ENCODE measurements at regions of chr17 and their contacts with region 1.

Region 1: DNA sequence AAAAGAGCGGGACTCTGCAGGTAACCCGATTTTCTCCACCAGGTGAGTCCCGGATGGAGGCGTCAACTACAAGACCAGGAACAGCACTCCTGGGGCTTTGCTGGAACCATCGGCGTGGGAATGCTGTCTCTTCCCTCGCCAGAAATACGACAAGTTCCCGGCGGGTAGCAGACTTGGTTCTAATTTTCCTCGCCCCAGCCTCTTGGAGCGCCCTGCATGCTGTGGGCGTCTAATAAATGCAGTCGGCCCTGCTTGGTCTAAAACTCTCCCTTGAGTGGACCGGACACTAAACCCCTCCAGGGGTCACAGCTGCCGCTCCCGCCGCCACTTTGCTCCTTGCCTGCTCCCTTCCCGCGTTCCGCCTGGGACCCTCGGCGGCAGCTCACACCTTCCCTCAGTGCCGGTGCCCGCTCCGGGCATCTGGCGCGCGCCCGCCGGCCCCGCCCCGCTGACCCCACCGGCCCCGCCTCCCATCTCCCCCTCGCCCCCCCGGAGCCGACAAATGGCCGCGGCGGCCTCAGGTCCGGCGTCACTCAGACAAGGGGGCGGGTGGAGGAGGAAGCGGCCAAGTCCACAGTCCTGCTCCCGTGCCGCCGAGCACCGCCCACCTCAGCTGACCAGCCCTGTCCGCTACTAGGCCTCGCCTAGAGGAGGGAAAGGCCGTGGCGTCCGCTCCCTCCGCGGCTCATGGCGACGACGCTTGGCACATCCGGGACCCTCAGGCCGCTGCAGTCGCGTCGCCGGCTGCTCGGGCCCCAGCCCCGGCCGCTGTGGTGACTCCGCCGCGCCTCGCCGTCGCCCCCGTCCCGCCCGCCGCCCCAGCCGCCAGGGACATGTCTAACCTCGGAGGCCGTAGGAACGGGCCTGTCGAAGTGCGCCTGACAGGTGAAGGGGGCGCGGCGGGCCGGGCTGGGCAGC is 65.8 kb downstream of the KPNA2 start:
- DNase-seq: peak; percentile 75
- ATAC-seq: peak; percentile 86
- H3K4me3 Mint-ChIP-seq: peak overlapping the region; percentile 93
- H3K27ac Mint-ChIP-seq: peak overlapping the region; percentile 85
- H3K4me1 Mint-ChIP-seq: peaks cover 31% of the 10 kb centered on the region
- H3K27me3 Mint-ChIP-seq: no peaks in the 10 kb centered on the region
- CTCF ChIP-seq: no peak

Region 2: GRCh38 chr17:68019675-68020408 is 81.5 kb before region 1 on chr17:
- CTCF ChIA-PET with region 1: no interaction called
- POLR2A ChIA-PET with region 1: no interaction called
- intact Hi-C with region 1: loop called (anchors 5 kb)
- DNase-seq: peak; percentile 99
- ATAC-seq: peak; percentile 90
- H3K4me3 Mint-ChIP-seq: peak overlapping the region; percentile 90
- H3K27ac Mint-ChIP-seq: peak overlapping the region; percentile 90
- H3K4me1 Mint-ChIP-seq: peaks cover 14% of the 10 kb centered on the region
- H3K27me3 Mint-ChIP-seq: peaks cover 2% of the 10 kb centered on the region
- CTCF ChIP-seq: no peak

Region 3: GRCh38 chr17:68089887-68090286 is 11.4 kb before region 1 on chr17:
- CTCF ChIA-PET with region 1: no interaction called
- POLR2A ChIA-PET with region 1: interaction called, 5 read pairs
- intact Hi-C with region 1: loop called (anchors 1 kb)
- DNase-seq: no peak
- ATAC-seq: no peak
- H3K4me3 Mint-ChIP-seq: no peak overlapping the region
- H3K27ac Mint-ChIP-seq: no peak overlapping the region
- H3K4me1 Mint-ChIP-seq: peaks cover 39% of the 10 kb centered on the region
- H3K27me3 Mint-ChIP-seq: no peaks in the 10 kb centered on the region
- CTCF ChIP-seq: no peak

Measured in activated B cell treated with CpG ODN at 0.5 μM for 24 hours (primary cell).